ENCODE measurements at regions of chr3 and their contacts with region 1.

Region 1: GRCh38 chr3:134232151-134232550 is 18.5 kb downstream of the RYK start:
- DNase-seq: no peak
- ATAC-seq: peak; percentile 77
- H3K4me3 ChIP-seq: no peak overlapping the region
- H3K27ac ChIP-seq: no peak overlapping the region
- H3K4me1 ChIP-seq: peaks cover 4% of the 10 kb centered on the region; the same call in 1 of the 2 replicates
- H3K27me3 ChIP-seq: no peaks in the 10 kb centered on the region
- CTCF ChIP-seq: no peak
- EP300 ChIP-seq: no peak
- POLR2A ChIP-seq: no peak
- RAD21 ChIP-seq: no peak

Region 2: DNA sequence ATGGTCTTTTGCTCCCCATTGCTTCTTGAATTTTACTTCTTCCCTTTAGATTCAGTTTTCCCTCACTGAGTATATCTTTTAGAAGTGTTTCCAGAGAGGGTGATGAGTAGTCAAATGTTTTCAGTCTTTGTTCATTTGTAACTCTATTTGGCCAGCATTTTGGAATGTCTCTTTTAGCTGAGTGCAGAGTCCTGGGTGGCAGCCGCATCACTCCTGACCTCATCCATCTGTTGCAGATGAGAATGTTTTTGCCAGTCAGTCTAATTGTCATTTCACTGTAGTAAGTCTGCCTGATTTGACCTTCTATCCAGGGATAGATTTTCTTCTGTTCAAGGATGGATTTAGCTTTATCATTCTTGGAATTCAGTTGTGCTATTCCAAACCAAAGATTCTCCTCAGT is 419.3 kb before region 1 on chr3:
- CTCF ChIA-PET with region 1: no interaction called
- POLR2A ChIA-PET with region 1: no interaction called
- RAD21 ChIA-PET with region 1: no interaction called
- SMC1A ChIA-PET with region 1: interaction called, 3 read pairs
- in situ Hi-C with region 1: no loop called
- intact Hi-C with region 1: loop called (anchors 10 kb)
- DNase-seq: no peak
- ATAC-seq: no peak
- H3K4me3 ChIP-seq: no peak overlapping the region
- H3K27ac ChIP-seq: no peak overlapping the region
- H3K4me1 ChIP-seq: no peaks in the 10 kb centered on the region
- H3K27me3 ChIP-seq: no peaks in the 10 kb centered on the region
- CTCF ChIP-seq: no peak
- EP300 ChIP-seq: no peak
- POLR2A ChIP-seq: no peak
- RAD21 ChIP-seq: no peak

Region 3: GRCh38 chr3:134039161-134039862 is 192.8 kb before region 1 on chr3:
- CTCF ChIA-PET with region 1: no interaction called
- POLR2A ChIA-PET with region 1: no interaction called
- RAD21 ChIA-PET with region 1: no interaction called
- SMC1A ChIA-PET with region 1: no interaction called
- in situ Hi-C with region 1: no loop called
- intact Hi-C with region 1: no loop called
- DNase-seq: no peak
- ATAC-seq: peak; percentile 57
- H3K4me3 ChIP-seq: no peak overlapping the region
- H3K27ac ChIP-seq: no peak overlapping the region
- H3K4me1 ChIP-seq: no peaks in the 10 kb centered on the region
- H3K27me3 ChIP-seq: peaks cover 0 to 2% of the 10 kb centered on the region in 2 experiments; a peak in 2 of 4 replicates
- CTCF ChIP-seq: peak; percentile 5 to 18 (median 14); a peak in 1 of 6 replicates
- EP300 ChIP-seq: no peak
- POLR2A ChIP-seq: no peak
- RAD21 ChIP-seq: no peak

Measured in GM12878 (cell line).